ENCODE measurements at regions of chr11 and their contacts with region 1.

Region 1: DNA sequence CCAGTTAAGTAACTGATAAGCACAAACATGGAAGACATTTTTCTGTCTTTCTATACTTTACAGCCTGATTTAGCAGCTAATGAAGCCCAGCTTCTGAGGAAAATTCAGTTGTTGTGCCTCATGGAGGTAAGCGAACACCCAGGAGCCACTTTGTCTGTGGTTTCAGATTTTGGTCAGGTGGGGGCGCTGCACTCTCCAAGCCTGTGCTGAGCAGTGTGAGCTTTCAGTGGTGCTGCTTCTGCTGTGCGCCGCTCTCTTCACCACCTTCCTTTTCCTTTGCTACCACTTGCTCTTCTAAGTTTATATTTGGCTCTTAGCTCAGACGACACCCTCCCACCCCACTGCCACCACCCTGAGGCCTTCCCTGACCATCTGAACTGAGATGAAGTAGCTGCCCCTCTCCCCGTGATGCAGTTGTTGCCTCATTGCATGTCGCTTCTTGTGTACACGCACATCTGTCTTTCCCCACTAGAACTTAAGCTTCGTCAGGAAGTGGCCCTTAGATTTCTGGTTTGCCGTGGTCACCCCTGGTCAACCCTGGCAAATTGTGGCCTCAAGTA is 14.0 kb downstream of the PSMD13 start:
- DNase-seq: peak; percentile 89
- H3K4me3 ChIP-seq: no peak overlapping the region
- H3K27ac ChIP-seq: peak overlapping the region in 3 of 8 donors; percentile 8 to 44 (median 23)
- H3K4me1 ChIP-seq: peaks cover 0 to 9% (median 0%) of the 10 kb centered on the region in 6 donors
- H3K27me3 ChIP-seq: no peaks in the 10 kb centered on the region
- CTCF ChIP-seq: peak; percentile 55 to 86 (median 70)
- POLR2A ChIP-seq: no peak

Region 2: GRCh38 chr11:363948-364761 is 113.3 kb after region 1 on chr11:
- intact Hi-C with region 1: loop called (anchors 10 kb)
- DNase-seq: peak; percentile 91
- H3K4me3 ChIP-seq: no peak overlapping the region
- H3K27ac ChIP-seq: peak overlapping the region in 2 of 8 donors; percentile 3 to 55
- H3K4me1 ChIP-seq: peaks cover 6 to 15% (median 11%) of the 10 kb centered on the region in 6 donors
- H3K27me3 ChIP-seq: peaks cover 7 to 54% (median 29%) of the 10 kb centered on the region in 7 donors
- CTCF ChIP-seq: peak; percentile 30 to 73 (median 49)
- POLR2A ChIP-seq: no peak

Region 3: DNA sequence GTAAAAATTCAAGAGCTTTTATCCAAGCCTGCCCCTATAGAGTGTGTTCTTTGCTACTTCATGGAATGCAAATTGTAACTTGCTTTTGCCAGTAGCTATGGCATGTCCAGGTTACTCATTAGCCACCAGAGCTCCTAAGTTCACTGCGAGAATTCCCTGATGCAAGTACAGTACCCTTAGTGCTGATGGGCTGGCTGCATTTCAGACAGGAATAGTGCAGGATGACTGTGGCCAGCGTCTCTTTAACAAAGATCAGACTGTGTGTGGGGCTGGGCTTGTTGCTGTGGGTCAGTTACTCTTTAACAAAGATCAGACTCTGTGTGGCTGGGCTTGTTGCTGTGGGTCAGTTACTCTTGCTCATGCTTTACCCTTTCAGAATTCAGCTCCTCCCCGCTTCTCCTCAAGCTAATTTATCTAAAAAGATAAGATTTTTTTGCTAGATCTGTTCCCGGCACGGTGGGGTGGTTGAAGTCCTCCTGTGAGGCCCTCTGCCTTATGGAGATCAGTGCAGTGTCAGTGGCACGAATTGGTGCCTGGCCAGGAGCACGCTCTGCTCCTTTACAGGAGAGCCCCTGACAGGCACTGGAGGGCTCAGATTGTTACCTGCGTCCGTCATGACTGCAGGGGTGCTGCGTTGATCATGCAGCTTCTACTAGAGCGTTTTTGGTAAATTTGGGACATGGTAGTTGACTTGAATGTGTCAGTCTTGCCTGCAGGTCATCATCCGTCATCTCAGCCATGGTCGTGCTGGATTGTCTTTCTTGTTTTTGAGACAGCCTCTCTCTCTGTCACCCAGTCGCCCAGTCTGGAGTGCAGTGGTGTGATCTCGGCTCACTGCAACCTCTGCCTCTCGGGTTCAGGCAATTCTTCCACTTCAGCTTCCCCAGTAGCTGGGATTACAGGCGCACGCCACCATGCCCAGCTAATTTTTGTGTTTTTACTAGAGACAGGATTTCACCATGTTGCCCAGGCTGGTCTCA is 701.9 kb after region 1 on chr11:
- intact Hi-C with region 1: no loop called
- DNase-seq: no peak
- H3K4me3 ChIP-seq: no peak overlapping the region
- H3K27ac ChIP-seq: peak overlapping the region in 3 of 8 donors; percentile 7 to 28 (median 10)
- H3K4me1 ChIP-seq: peaks cover 3 to 62% (median 41%) of the 10 kb centered on the region in 6 donors
- H3K27me3 ChIP-seq: no peaks in the 10 kb centered on the region
- CTCF ChIP-seq: no peak
- POLR2A ChIP-seq: no peak